GM12878 (cell line): ENCODE measurements at regions of chr3 and their contacts with region 1.

Region 1: GRCh38 chr3:101936419-101937356 is 87.4 kb downstream of the NFKBIZ start:
- DNase-seq: peak; percentile 95
- ATAC-seq: peak; percentile 82
- H3K4me3 ChIP-seq: peak overlapping the region; percentile 44; the same call in 1 of the 2 replicates
- H3K27ac ChIP-seq: peak overlapping the region; percentile 56
- H3K4me1 ChIP-seq: peaks cover 53% of the 10 kb centered on the region
- H3K27me3 ChIP-seq: no peaks in the 10 kb centered on the region
- CTCF ChIP-seq: no peak
- EP300 ChIP-seq: peak; percentile 91 to 94
- POLR2A ChIP-seq: no peak
- RAD21 ChIP-seq: peak; percentile 17; the same call in 1 of the 2 replicates

Region 2: GRCh38 chr3:101133652-101134051 is 803.0 kb before region 1 on chr3:
- CTCF ChIA-PET with region 1: no interaction called
- POLR2A ChIA-PET with region 1: no interaction called
- RAD21 ChIA-PET with region 1: no interaction called
- SMC1A ChIA-PET with region 1: no interaction called
- in situ Hi-C with region 1: no loop called
- intact Hi-C with region 1: no loop called
- DNase-seq: no peak
- ATAC-seq: no peak
- H3K4me3 ChIP-seq: no peak overlapping the region
- H3K27ac ChIP-seq: no peak overlapping the region
- H3K4me1 ChIP-seq: no peaks in the 10 kb centered on the region
- H3K27me3 ChIP-seq: no peaks in the 10 kb centered on the region; a peak in 1 of 4 replicates
- CTCF ChIP-seq: no peak
- EP300 ChIP-seq: no peak
- POLR2A ChIP-seq: no peak
- RAD21 ChIP-seq: no peak

Region 3: DNA sequence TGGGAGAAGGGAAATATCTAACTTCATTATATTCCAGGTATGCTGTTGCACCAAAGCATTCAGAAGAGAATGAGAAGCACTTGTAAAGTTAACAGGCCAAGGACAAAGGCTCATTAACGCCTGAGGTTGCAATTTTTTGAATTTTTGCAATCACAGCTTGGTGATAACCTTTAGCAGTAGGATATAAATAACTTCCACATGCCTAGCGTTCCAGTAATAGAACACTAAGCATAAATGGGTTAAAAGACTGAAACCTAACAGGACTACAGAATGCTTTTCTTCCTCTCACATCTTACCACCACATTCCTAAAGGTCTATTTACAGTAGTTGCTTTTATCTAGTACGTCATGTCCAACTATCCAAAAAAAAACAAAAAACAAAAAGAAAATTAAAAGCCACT is 558.9 kb before region 1 on chr3:
- CTCF ChIA-PET with region 1: no interaction called
- POLR2A ChIA-PET with region 1: no interaction called
- RAD21 ChIA-PET with region 1: no interaction called
- SMC1A ChIA-PET with region 1: no interaction called
- in situ Hi-C with region 1: no loop called
- intact Hi-C with region 1: no loop called
- DNase-seq: no peak
- ATAC-seq: no peak
- H3K4me3 ChIP-seq: no peak overlapping the region
- H3K27ac ChIP-seq: no peak overlapping the region
- H3K4me1 ChIP-seq: peaks cover 11% of the 10 kb centered on the region; the same call in 1 of the 2 replicates
- H3K27me3 ChIP-seq: no peaks in the 10 kb centered on the region
- CTCF ChIP-seq: no peak
- EP300 ChIP-seq: no peak
- POLR2A ChIP-seq: no peak
- RAD21 ChIP-seq: no peak

Region 4: DNA sequence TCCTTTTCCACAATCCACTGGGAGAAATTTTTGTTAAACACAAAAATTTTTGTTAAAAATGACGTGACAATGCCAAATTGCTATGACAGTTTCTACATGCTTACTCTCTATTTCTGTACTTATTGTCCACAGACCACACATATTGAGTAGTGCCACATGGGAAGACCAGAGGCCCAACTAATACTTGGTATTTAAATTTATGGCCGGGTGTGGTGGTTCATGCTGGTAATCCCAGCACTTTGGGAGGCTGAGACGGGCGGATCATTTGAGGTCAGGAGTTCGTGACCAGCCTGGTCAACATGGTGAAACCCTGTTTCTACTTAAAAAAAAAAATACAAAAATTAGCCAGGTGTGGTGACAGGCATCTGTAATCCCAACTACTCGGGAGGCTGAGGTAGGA is 280.0 kb before region 1 on chr3:
- CTCF ChIA-PET with region 1: no interaction called
- POLR2A ChIA-PET with region 1: no interaction called
- RAD21 ChIA-PET with region 1: no interaction called
- SMC1A ChIA-PET with region 1: no interaction called
- in situ Hi-C with region 1: no loop called
- intact Hi-C with region 1: no loop called
- DNase-seq: no peak
- ATAC-seq: no peak
- H3K4me3 ChIP-seq: no peak overlapping the region
- H3K27ac ChIP-seq: no peak overlapping the region
- H3K4me1 ChIP-seq: no peaks in the 10 kb centered on the region
- H3K27me3 ChIP-seq: no peaks in the 10 kb centered on the region
- CTCF ChIP-seq: no peak
- EP300 ChIP-seq: no peak
- POLR2A ChIP-seq: no peak
- RAD21 ChIP-seq: no peak

Region 5: GRCh38 chr3:101724329-101725193 is 212.1 kb before region 1 on chr3 and contains the start of gene CEP97:
- CTCF ChIA-PET with region 1: no interaction called
- POLR2A ChIA-PET with region 1: interaction called, 3 read pairs
- RAD21 ChIA-PET with region 1: no interaction called
- SMC1A ChIA-PET with region 1: no interaction called
- in situ Hi-C with region 1: no loop called
- intact Hi-C with region 1: loop called (anchors 10 kb)
- DNase-seq: peak; percentile 78
- ATAC-seq: peak; percentile 95
- H3K4me3 ChIP-seq: peak within 1 kb of the TSS; percentile 79
- H3K27ac ChIP-seq: peak within 1 kb of the TSS; percentile 38
- H3K4me1 ChIP-seq: peaks cover 15% of the 10 kb centered on the region
- H3K27me3 ChIP-seq: no peaks in the 10 kb centered on the region
- CTCF ChIP-seq: no peak
- EP300 ChIP-seq: no peak
- POLR2A ChIP-seq: peak; percentile 52; the same call in 1 of the 2 replicates
- RAD21 ChIP-seq: no peak
- polyA plus RNA-seq, gene CEP97: 1.9 to 4.3 TPM

Region 6: DNA sequence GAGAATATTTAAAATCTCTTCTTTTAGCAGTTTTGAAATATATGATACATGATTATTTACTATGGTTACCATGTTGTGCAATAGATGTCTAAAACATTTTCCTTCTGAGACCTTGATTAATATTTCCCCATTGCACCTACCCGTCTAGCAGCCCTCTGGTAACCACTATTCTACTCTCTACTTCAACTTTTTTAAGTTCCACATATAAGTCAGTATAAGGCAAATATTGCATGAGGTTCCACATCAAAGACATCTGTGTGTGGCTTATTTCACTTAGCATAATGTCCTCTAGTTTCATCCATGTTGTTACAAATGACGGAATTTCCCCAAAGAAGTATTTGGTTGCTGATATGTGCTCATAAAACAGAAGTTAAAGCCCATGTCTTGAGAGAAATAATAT is 116.9 kb before region 1 on chr3:
- CTCF ChIA-PET with region 1: interaction called, 13 read pairs
- POLR2A ChIA-PET with region 1: no interaction called
- RAD21 ChIA-PET with region 1: interaction called, 8 read pairs
- SMC1A ChIA-PET with region 1: interaction called, 12 read pairs
- in situ Hi-C with region 1: no loop called
- intact Hi-C with region 1: loop called (anchors 5 kb)
- DNase-seq: no peak
- ATAC-seq: peak; percentile 93
- H3K4me3 ChIP-seq: no peak overlapping the region
- H3K27ac ChIP-seq: no peak overlapping the region
- H3K4me1 ChIP-seq: peaks cover 24% of the 10 kb centered on the region
- H3K27me3 ChIP-seq: no peaks in the 10 kb centered on the region
- CTCF ChIP-seq: no peak
- EP300 ChIP-seq: peak in 1 of 2 experiments; percentile 47; a peak in 1 of 4 replicates
- POLR2A ChIP-seq: no peak
- RAD21 ChIP-seq: no peak

Region 7: GRCh38 chr3:101836652-101837598 is 99.8 kb before region 1 on chr3:
- CTCF ChIA-PET with region 1: no interaction called
- POLR2A ChIA-PET with region 1: interaction called, 5 read pairs
- RAD21 ChIA-PET with region 1: interaction called, 43 read pairs
- SMC1A ChIA-PET with region 1: interaction called, 6 read pairs
- in situ Hi-C with region 1: no loop called
- intact Hi-C with region 1: no loop called
- DNase-seq: no peak
- ATAC-seq: peak; percentile 35
- H3K4me3 ChIP-seq: peak overlapping the region; percentile 32; the same call in 1 of the 2 replicates
- H3K27ac ChIP-seq: 0 out of 2 replicates have a peak overlapping the region, but pooled peaks have one; percentile 27
- H3K4me1 ChIP-seq: peaks cover 40% of the 10 kb centered on the region
- H3K27me3 ChIP-seq: no peaks in the 10 kb centered on the region
- CTCF ChIP-seq: no peak
- EP300 ChIP-seq: peak in 1 of 2 experiments; percentile 19; a peak in 1 of 4 replicates
- POLR2A ChIP-seq: no peak
- RAD21 ChIP-seq: no peak

Region 8: DNA sequence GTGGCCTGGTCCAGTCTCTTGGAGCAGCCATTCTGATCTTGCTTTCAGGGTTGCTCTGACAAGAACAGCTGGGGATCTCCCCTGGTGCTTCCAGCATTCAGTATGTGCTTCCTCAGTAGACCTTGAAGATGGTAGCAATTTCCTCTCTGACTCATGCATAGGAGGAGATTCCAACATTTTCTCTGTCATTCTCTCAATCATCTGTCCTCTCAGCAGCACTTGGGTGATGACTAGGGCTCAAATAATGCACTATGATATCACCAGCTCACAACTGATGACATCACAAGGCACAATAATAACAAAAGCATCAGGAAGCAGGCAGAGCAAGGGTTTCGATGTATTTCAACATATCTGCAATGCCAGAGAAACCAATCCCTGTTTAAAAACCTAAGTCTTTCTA is 34.6 kb before region 1 on chr3:
- CTCF ChIA-PET with region 1: interaction called, 11 read pairs
- POLR2A ChIA-PET with region 1: interaction called, 28 read pairs
- RAD21 ChIA-PET with region 1: interaction called, 71 read pairs
- SMC1A ChIA-PET with region 1: interaction called, 62 read pairs
- in situ Hi-C with region 1: no loop called
- intact Hi-C with region 1: loop called (anchors 1 kb)
- DNase-seq: no peak
- ATAC-seq: peak; percentile 42
- H3K4me3 ChIP-seq: no peak overlapping the region
- H3K27ac ChIP-seq: no peak overlapping the region
- H3K4me1 ChIP-seq: peaks cover 26% of the 10 kb centered on the region
- H3K27me3 ChIP-seq: no peaks in the 10 kb centered on the region
- CTCF ChIP-seq: no peak
- EP300 ChIP-seq: no peak
- POLR2A ChIP-seq: no peak
- RAD21 ChIP-seq: no peak

Region 9: DNA sequence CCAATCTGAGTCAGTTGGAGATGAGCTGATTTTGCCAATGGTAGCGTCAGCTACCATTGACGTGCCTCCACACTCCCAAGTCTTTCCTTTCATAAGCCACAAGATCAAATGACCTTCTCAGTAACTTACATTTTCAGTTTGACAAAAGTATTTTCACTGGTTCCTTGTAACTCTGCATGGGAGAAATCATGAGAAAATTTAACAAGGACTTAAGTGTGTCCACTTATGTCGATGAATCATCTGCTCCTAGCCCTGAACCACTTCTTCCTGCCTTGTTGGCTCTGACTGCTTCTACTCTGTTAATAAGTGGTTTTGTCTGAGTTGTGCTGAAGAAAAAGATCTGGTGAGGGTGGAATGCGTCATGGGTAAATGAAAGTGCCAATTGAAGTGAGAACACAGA is 13.8 kb after region 1 on chr3:
- CTCF ChIA-PET with region 1: interaction called, 3 read pairs
- POLR2A ChIA-PET with region 1: interaction called, 5 read pairs
- RAD21 ChIA-PET with region 1: interaction called, 9 read pairs
- SMC1A ChIA-PET with region 1: interaction called, 48 read pairs
- in situ Hi-C with region 1: no loop called
- intact Hi-C with region 1: no loop called
- DNase-seq: peak; percentile 87
- ATAC-seq: peak; percentile 92
- H3K4me3 ChIP-seq: no peak overlapping the region
- H3K27ac ChIP-seq: no peak overlapping the region
- H3K4me1 ChIP-seq: no peaks in the 10 kb centered on the region
- H3K27me3 ChIP-seq: no peaks in the 10 kb centered on the region
- CTCF ChIP-seq: no peak
- EP300 ChIP-seq: peak in 1 of 2 experiments; percentile 49; a peak in 1 of 4 replicates
- POLR2A ChIP-seq: no peak
- RAD21 ChIP-seq: no peak

Region 10: GRCh38 chr3:102057781-102058421 is 121.2 kb after region 1 on chr3:
- CTCF ChIA-PET with region 1: interaction called, 3 read pairs
- POLR2A ChIA-PET with region 1: interaction called, 21 read pairs
- RAD21 ChIA-PET with region 1: interaction called, 19 read pairs
- SMC1A ChIA-PET with region 1: interaction called, 35 read pairs
- in situ Hi-C with region 1: no loop called
- intact Hi-C with region 1: loop called (anchors 1 kb)
- DNase-seq: peak; percentile 85
- ATAC-seq: peak; percentile 79
- H3K4me3 ChIP-seq: no peak overlapping the region
- H3K27ac ChIP-seq: peak overlapping the region; percentile 65
- H3K4me1 ChIP-seq: peaks cover 37% of the 10 kb centered on the region
- H3K27me3 ChIP-seq: no peaks in the 10 kb centered on the region
- CTCF ChIP-seq: no peak
- EP300 ChIP-seq: peak; percentile 76 to 79; a peak in 3 of 4 replicates
- POLR2A ChIP-seq: no peak
- RAD21 ChIP-seq: no peak

Region 11: GRCh38 chr3:102646557-102646956 is 709.9 kb after region 1 on chr3:
- CTCF ChIA-PET with region 1: no interaction called
- POLR2A ChIA-PET with region 1: no interaction called
- RAD21 ChIA-PET with region 1: no interaction called
- SMC1A ChIA-PET with region 1: no interaction called
- in situ Hi-C with region 1: no loop called
- intact Hi-C with region 1: no loop called
- DNase-seq: no peak
- ATAC-seq: no peak
- H3K4me3 ChIP-seq: no peak overlapping the region
- H3K27ac ChIP-seq: no peak overlapping the region
- H3K4me1 ChIP-seq: no peaks in the 10 kb centered on the region
- H3K27me3 ChIP-seq: no peaks in the 10 kb centered on the region
- CTCF ChIP-seq: no peak
- EP300 ChIP-seq: no peak
- POLR2A ChIP-seq: no peak
- RAD21 ChIP-seq: no peak